ENCODE measurements at regions of chr6 and their contacts with region 1.

Region 1: DNA sequence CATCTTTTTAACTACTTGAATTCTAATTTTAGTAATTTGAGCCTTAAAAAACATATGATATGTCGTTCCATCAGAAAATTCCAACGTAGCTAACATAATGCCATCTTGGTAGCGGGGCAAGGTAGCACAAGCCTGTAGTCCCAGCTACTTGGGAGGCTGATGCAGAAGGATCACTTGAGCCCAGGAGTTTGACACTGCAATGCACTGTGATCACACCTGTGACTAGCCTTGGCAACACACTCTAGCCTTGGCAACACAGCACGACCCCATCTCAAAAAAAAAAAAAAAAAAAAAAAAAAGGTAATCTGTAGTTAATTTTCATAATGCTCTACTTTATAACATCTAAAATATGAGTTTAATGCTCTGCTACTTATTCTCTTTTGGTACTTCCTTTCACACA is 6.7 kb downstream of the BCLAF1 start:
- DNase-seq: peak in 2 of 9 experiments; percentile 23 to 37
- ATAC-seq: no peak
- H3K4me3 ChIP-seq: no peak overlapping the region
- H3K4me3 Mint-ChIP-seq: peak overlapping the region; percentile 68
- H3K27ac ChIP-seq: peak overlapping the region in 1 of 2 experiments; percentile 34
- H3K27ac Mint-ChIP-seq: no peak overlapping the region
- H3K4me1 ChIP-seq: peaks cover 74% of the 10 kb centered on the region
- H3K4me1 Mint-ChIP-seq: peaks cover 85% of the 10 kb centered on the region
- H3K27me3 ChIP-seq: no peaks in the 10 kb centered on the region
- H3K27me3 Mint-ChIP-seq: no peaks in the 10 kb centered on the region
- CTCF ChIP-seq: no peak

Region 2: GRCh38 chr6:136235217-136235532 is 47.7 kb before region 1 on chr6:
- CTCF ChIA-PET with region 1: no interaction called
- POLR2A ChIA-PET with region 1: no interaction called
- intact Hi-C with region 1: no loop called
- DNase-seq: no peak
- ATAC-seq: no peak
- H3K4me3 ChIP-seq: no peak overlapping the region
- H3K4me3 Mint-ChIP-seq: no peak overlapping the region
- H3K27ac ChIP-seq: no peak overlapping the region
- H3K27ac Mint-ChIP-seq: no peak overlapping the region
- H3K4me1 ChIP-seq: no peaks in the 10 kb centered on the region
- H3K4me1 Mint-ChIP-seq: peaks cover 9% of the 10 kb centered on the region
- H3K27me3 ChIP-seq: no peaks in the 10 kb centered on the region
- H3K27me3 Mint-ChIP-seq: no peaks in the 10 kb centered on the region
- CTCF ChIP-seq: no peak

Region 3: DNA sequence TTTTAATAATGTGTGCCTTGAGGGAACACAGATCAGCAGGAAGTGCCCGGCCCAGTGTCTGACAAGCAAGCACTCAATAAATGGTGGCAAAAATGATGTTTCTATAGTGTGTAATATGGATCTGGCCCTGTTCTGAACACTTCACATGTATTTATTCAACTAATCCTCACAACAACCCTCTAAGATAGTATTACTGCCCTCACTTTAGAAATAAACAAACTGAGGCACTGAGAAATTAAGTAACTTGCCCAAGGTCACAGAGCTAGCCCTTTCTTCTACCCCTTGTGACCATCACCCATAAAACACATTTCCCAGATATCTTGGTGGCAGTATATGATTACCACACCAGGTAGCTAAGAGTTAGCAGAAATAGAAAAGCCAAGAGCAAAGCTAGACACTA is 20.0 kb before region 1 on chr6:
- CTCF ChIA-PET with region 1: no interaction called
- POLR2A ChIA-PET with region 1: no interaction called
- intact Hi-C with region 1: loop called (anchors 2 kb)
- DNase-seq: no peak
- ATAC-seq: no peak
- H3K4me3 ChIP-seq: no peak overlapping the region
- H3K4me3 Mint-ChIP-seq: no peak overlapping the region
- H3K27ac ChIP-seq: no peak overlapping the region
- H3K27ac Mint-ChIP-seq: no peak overlapping the region
- H3K4me1 ChIP-seq: peaks cover 8% of the 10 kb centered on the region
- H3K4me1 Mint-ChIP-seq: peaks cover 51% of the 10 kb centered on the region
- H3K27me3 ChIP-seq: no peaks in the 10 kb centered on the region
- H3K27me3 Mint-ChIP-seq: no peaks in the 10 kb centered on the region
- CTCF ChIP-seq: no peak

Measured in CD8-positive, alpha-beta T cell (primary cell).